ENCODE measurements at regions of chr5 and their contacts with region 1.

Region 1: GRCh38 chr5:149834246-149834855 is 104.2 kb downstream of the PPARGC1B start:
- DNase-seq: peak; percentile 69 to 84 (median 73)
- ATAC-seq: peak; percentile 63
- H3K4me3 ChIP-seq: no peak overlapping the region
- H3K27ac ChIP-seq: no peak overlapping the region
- H3K4me1 ChIP-seq: no peaks in the 10 kb centered on the region
- H3K27me3 ChIP-seq: no peaks in the 10 kb centered on the region
- CTCF ChIP-seq: peak; percentile 33 to 71 (median 68)
- POLR2A ChIP-seq: no peak

Region 2: DNA sequence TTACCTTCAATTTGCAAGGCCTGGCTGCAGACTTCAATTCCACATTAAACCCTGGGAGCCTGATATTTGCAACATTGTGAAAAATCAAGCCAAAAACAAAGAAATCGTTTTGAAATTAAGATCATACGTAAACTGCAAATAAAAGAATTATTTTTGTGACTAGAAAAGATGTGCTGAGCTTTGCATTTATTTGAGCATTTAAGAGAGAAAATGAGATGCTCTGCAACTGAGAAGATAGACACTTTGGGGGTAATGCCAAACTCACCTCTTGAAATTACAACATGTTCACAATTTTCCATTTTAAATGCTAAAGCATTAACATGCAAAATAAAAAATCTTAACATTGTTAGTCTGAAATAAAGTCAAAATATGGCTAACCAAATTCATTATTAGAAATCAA is 329.7 kb before region 1 on chr5:
- intact Hi-C with region 1: no loop called
- DNase-seq: no peak
- ATAC-seq: no peak
- H3K4me3 ChIP-seq: no peak overlapping the region
- H3K27ac ChIP-seq: no peak overlapping the region
- H3K4me1 ChIP-seq: no peaks in the 10 kb centered on the region
- H3K27me3 ChIP-seq: no peaks in the 10 kb centered on the region
- CTCF ChIP-seq: no peak
- POLR2A ChIP-seq: no peak

Region 3: DNA sequence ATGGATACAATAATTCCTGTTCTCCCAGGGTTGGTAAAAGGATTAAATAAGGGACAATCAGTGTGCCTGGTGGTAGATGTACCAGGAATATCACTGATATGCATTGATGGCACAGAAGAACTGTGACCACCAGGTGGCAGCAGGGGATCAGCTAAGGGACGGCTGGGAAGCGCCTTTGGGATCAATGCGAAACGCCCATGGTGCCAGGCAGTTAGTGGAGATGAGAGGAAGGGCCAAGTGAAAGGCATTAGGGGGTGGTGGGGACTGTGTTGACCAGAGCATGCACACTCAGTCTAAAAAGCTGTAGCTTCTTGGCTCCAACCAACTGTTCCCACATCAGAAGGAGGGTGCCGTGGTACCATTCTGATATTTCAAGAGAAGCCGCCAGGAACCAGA is 197.5 kb before region 1 on chr5:
- intact Hi-C with region 1: loop called (anchors 5 kb)
- DNase-seq: peak; percentile 34 to 82 (median 50)
- ATAC-seq: peak; percentile 74
- H3K4me3 ChIP-seq: no peak overlapping the region
- H3K27ac ChIP-seq: no peak overlapping the region
- H3K4me1 ChIP-seq: no peaks in the 10 kb centered on the region
- H3K27me3 ChIP-seq: no peaks in the 10 kb centered on the region
- CTCF ChIP-seq: peak in 6 of 7 experiments; percentile 46 to 93 (median 82)
- POLR2A ChIP-seq: no peak